Psoas muscle (tissue), 8 donors: ENCODE measurements at regions of chr21 and their contacts with region 1.

Region 1: GRCh38 chr21:38805328-38806152 is at the start of gene ETS2:
- DNase-seq: peak; percentile 90 to 95
- ATAC-seq: peak; percentile 86 to 90 (median 86)
- H3K4me3 ChIP-seq: peak within 1 kb of the TSS; percentile 76
- H3K27ac ChIP-seq: peak within 1 kb of the TSS; percentile 96
- H3K4me1 ChIP-seq: peaks cover 10% of the 10 kb centered on the region
- H3K27me3 ChIP-seq: no peaks in the 10 kb centered on the region
- CTCF ChIP-seq: no peak
- total RNA-seq, gene ETS2: 37.0 to 494 (median 96.6) TPM

Region 2: DNA sequence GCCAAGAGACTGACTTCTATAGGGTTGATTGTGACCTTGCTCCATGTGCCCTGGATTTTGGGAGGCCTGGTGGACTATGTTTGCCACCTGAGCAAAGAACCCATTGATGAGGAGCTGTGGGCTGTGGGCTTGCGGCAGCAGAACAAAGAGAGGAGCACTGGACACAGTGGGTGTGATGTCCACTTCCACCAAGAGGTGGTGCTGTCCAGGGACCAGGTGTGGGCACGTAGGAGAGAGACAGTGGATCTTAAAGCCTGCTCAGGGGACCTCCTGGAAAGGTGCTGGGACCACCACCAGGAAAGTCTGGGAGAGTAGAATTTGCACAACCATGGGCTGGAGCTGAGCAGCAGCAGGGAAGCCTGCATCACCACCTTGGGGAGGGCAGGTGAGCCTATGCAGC is 106.5 kb before region 1 on chr21:
- intact Hi-C with region 1: no loop called
- DNase-seq: no peak
- ATAC-seq: no peak
- H3K4me3 ChIP-seq: no peak overlapping the region
- H3K27ac ChIP-seq: no peak overlapping the region
- H3K4me1 ChIP-seq: no peaks in the 10 kb centered on the region
- H3K27me3 ChIP-seq: peaks cover 0 to 30% (median 8%) of the 10 kb centered on the region in 3 donors
- CTCF ChIP-seq: no peak

Region 3: GRCh38 chr21:38853421-38853919 is 47.9 kb after region 1 on chr21:
- intact Hi-C with region 1: loop called (anchors 1 to 5 kb)
- DNase-seq: peak; percentile 90 to 98
- ATAC-seq: peak; percentile 87 to 95 (median 90)
- H3K4me3 ChIP-seq: no peak overlapping the region
- H3K27ac ChIP-seq: peak overlapping the region; percentile 85
- H3K4me1 ChIP-seq: peaks cover 30% of the 10 kb centered on the region
- H3K27me3 ChIP-seq: no peaks in the 10 kb centered on the region
- CTCF ChIP-seq: no peak

Region 4: DNA sequence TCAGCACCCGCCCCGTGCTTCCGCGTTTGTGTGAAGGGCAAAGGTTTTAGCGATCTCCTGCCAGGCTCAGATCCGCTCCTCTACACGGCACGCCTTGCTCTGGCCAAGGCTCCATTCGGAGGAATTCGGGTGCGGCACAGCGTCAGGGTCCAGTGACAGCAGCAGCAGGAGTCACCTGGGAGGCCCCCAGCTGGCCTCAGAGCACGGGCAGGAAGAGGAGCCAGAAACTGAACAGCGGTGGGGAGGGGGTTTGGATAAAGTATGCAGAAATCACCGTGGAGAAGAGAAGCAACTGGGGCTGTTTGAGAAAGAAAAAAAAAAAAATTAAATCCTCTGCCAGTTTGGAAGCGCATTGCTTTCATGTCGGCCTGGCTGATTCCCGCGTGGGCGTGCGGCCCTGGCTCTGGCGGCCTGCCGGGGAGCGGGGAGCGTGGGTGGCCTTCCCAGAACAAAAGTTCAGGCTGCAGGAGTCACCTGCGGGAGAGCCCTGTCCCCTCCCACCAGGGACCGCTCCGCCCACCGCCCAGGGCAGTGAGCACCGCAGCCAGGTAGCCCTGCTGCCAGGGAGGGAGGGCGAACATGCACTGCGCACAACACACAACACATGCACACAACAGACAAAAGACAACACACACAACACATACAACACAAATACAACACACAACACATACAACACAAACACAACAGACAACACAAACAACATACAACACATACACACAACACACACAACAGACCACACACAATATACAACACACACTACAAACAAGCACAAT is 107.8 kb after region 1 on chr21:
- intact Hi-C with region 1: loop called in 1 of 2 experiments (anchors 5 kb)
- DNase-seq: peak; percentile 83 to 89
- ATAC-seq: peak; percentile 72 to 87 (median 81)
- H3K4me3 ChIP-seq: peak overlapping the region; percentile 48
- H3K27ac ChIP-seq: peak overlapping the region; percentile 94
- H3K4me1 ChIP-seq: peaks cover 51% of the 10 kb centered on the region
- H3K27me3 ChIP-seq: no peaks in the 10 kb centered on the region
- CTCF ChIP-seq: no peak

Region 5: DNA sequence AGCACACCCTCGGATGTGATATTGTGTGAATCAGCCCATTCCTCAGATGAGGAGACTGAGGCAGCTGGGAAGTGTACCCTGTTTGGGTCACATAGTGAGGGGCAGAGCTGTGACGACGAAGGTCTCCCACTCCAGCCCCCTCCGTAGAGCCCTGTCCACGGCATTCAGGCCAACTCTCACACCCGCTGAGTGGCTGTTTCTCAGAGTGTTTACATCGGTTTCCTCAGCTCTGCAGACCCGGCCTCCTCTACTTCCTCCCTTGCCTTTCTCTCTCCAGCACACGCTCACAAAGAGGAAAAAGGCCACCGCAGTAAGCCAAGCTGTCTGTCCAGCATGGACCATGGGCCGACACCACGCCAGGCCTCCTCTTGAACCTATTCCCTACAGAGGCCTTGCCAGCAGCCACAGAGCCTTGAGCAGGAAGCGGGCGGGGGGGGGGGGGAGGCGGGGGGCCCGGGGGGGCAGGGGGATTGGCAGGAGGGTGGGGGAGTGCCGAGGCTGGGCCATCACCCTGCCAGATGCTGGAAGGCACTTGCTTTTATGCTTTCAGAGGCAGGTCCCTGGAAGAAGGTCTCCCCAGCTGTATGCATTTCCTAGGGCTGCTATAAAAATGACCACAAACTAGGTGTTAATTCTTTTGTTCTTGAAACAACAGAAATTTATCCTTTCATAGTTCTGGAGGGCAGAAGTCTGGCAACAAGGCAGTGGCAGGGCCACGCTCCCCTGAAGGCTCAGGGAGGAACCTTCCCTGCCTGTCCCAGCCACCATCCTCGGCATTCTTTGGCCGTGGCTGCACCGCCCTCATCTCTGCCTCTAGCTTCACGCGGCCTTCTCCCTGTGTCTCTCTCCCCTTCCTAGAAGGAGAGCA is 199.3 kb after region 1 on chr21:
- intact Hi-C with region 1: loop called in 1 of 2 experiments (anchors 5 kb)
- DNase-seq: peak in 1 of 2 donors; percentile 67
- ATAC-seq: peak in 3 of 4 donors; percentile 27 to 46 (median 45)
- H3K4me3 ChIP-seq: no peak overlapping the region
- H3K27ac ChIP-seq: peak overlapping the region; percentile 51
- H3K4me1 ChIP-seq: peaks cover 12% of the 10 kb centered on the region
- H3K27me3 ChIP-seq: no peaks in the 10 kb centered on the region
- CTCF ChIP-seq: no peak

Region 6: GRCh38 chr21:39125752-39126485 is 320.4 kb after region 1 on chr21:
- intact Hi-C with region 1: loop called (anchors 2 to 5 kb)
- DNase-seq: peak in 1 of 2 donors; percentile 63
- ATAC-seq: peak; percentile 83 to 95 (median 94)
- H3K4me3 ChIP-seq: no peak overlapping the region
- H3K27ac ChIP-seq: peak overlapping the region; percentile 38
- H3K4me1 ChIP-seq: peaks cover 13% of the 10 kb centered on the region
- H3K27me3 ChIP-seq: no peaks in the 10 kb centered on the region
- CTCF ChIP-seq: peak; percentile 60